Dorsolateral prefrontal cortex (tissue), 120 donors: ENCODE measurements at regions of chr7 and their contacts with region 1.

Region 1: DNA sequence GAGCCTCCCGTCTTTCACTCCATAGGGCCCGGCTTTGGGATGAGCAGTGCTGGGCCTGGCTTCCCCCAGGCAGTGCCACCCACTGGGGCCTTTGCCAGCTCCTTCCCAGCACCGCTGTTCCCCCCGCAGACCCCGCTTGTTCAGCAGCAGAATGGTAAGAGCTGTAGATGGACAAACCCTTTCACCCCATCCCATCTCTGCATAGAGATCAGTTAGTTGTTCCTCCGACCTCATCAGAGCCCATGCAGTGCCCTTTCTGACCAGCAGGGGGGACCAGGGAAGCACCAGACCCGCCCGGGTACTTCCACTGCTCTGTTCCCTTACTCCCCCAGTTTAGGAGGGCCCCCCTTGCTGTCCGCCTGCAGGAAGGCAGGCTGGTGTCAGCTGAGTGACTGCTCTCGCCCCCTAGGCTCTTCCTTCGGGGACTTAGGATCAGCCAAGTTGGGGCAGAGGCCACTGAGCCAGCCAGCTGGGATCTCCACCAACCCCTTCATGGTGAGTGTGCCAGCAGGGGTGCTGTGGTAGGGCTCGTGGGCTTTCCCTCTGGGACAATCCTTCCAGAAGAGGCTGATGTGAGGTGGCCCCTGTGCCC is 9.8 kb downstream of the SAP25 start:
- DNase-seq: peak; percentile 69 to 83 (median 79)
- H3K4me3 ChIP-seq: no peak overlapping the region
- H3K27ac ChIP-seq: peak overlapping the region in 7 of 59 donors; percentile 3 to 51 (median 28)
- H3K27me3 ChIP-seq: no peaks in the 10 kb centered on the region
- CTCF ChIP-seq: peak; percentile 61 to 95 (median 90)

Region 2: GRCh38 chr7:100489824-100490223 is 74.1 kb before region 1 on chr7:
- intact Hi-C with region 1: loop called in 1 of 2 experiments (anchors 5 kb)
- DNase-seq: peak; percentile 74 to 99 (median 96)
- H3K4me3 ChIP-seq: peak overlapping the region in 43 of 59 donors; percentile 7 to 57 (median 29)
- H3K27ac ChIP-seq: peak overlapping the region in 35 of 59 donors; percentile 0 to 76 (median 56)
- H3K27me3 ChIP-seq: no peaks in the 10 kb centered on the region
- CTCF ChIP-seq: peak in 9 of 56 donors; percentile 10 to 31 (median 17)

Region 3: DNA sequence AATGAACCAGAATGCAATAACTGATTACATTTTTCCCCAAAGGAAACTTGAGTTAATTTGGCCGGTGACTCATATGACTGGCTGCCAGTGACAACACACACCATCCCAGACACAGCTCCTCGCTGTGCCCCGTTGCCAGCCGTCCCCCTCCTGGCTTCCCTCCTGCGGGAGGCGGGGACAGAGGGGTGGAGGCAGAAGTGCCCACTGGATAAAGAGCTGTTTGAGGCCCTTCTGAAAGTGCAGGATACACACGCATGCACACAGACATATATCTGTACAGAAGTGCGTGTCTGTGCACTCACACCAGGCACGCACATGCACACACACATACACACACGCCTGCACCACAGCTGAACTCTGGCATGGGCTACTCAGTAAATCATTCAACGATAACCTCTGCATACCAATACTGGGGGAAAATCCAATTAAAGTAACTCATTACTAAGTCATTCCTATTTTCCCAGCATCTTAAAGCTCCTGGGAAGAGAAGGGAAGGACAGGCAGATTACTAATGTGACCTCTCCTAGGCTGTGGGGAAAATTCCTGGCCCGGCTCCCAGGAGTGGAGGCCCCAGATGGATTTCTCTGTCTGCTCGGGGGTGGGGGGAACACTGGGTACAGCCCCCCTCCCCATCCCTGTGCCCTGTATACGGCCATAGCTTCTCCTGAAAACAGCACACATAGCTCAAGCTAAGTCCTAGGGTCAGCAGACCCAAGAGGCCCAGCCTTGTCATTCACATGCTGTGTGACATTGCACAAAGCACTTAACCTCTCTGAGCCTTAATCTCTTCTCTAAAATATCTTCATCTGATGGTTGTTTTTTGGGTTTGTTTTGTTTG is 1117.5 kb after region 1 on chr7:
- intact Hi-C with region 1: no loop called
- DNase-seq: peak in 7 of 10 donors; percentile 30 to 79 (median 64)
- H3K4me3 ChIP-seq: peak overlapping the region in 2 of 59 donors; percentile 3 to 27
- H3K27ac ChIP-seq: no peak overlapping the region
- H3K27me3 ChIP-seq: no peaks in the 10 kb centered on the region
- CTCF ChIP-seq: no peak